ENCODE measurements at regions of chr2 and their contacts with region 1.

Region 1: DNA sequence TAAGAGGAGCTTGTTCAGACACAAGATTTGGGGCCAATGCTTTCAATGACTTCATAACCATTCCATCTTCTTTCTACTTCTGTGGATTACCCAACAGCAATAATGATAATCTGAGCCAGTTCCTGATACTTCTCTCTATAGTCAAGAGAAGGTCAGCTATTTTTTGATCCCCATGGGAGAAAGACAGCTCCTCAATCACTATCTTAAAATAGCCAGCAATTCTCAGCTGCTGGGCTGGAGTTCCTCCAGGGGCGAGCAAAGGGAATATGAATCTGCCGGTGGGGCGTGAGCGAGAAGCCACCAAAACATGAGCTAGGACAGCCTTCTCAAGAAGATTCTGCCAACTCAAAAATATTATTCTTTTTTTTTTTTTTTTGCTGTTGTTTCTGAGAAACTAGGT is at the start of gene TMEM182:
- DNase-seq: peak; percentile 68 to 80 (median 73)
- ATAC-seq: peak; percentile 88 to 95 (median 92)
- H3K4me3 ChIP-seq: peak within 1 kb of the TSS; percentile 2 to 60 (median 46)
- H3K27ac ChIP-seq: peak within 1 kb of the TSS; percentile 26 to 81 (median 72)
- H3K4me1 ChIP-seq: peaks cover 0 to 35% (median 0%) of the 10 kb centered on the region in 12 donors
- H3K27me3 ChIP-seq: no peaks in the 10 kb centered on the region
- CTCF ChIP-seq: no peak
- POLR2A ChIP-seq: peak in 1 of 2 donors; percentile 26
- total RNA-seq, gene TMEM182: 68.7 to 179 (median 149) TPM

Region 2: GRCh38 chr2:102788885-102789260 is 27.1 kb after region 1 on chr2:
- intact Hi-C with region 1: loop called in 1 of 10 experiments (anchors 1 kb)
- DNase-seq: peak; percentile 59 to 84 (median 73)
- ATAC-seq: peak; percentile 96 to 98 (median 96)
- H3K4me3 ChIP-seq: no peak overlapping the region
- H3K27ac ChIP-seq: peak overlapping the region; percentile 52 to 93 (median 84)
- H3K4me1 ChIP-seq: peaks cover 0 to 86% (median 23%) of the 10 kb centered on the region in 12 donors
- H3K27me3 ChIP-seq: no peaks in the 10 kb centered on the region
- CTCF ChIP-seq: no peak
- POLR2A ChIP-seq: no peak